ENCODE measurements at regions of chr17 and their contacts with region 1.

Region 1: GRCh38 chr17:77542551-77543490 is 402.1 kb downstream of the SEC14L1 start:
- DNase-seq: peak; percentile 83
- H3K4me3 ChIP-seq: no peak overlapping the region
- H3K27ac ChIP-seq: no peak overlapping the region
- H3K4me1 ChIP-seq: peaks cover 10% of the 10 kb centered on the region
- CTCF ChIP-seq: peak; percentile 98

Region 2: GRCh38 chr17:77741109-77741508 is 198.3 kb after region 1 on chr17:
- CTCF ChIA-PET with region 1: no interaction called
- POLR2A ChIA-PET with region 1: no interaction called
- intact Hi-C with region 1: loop called (anchors 10 kb)
- DNase-seq: peak; percentile 37
- H3K4me3 ChIP-seq: no peak overlapping the region
- H3K27ac ChIP-seq: no peak overlapping the region
- H3K4me1 ChIP-seq: no peaks in the 10 kb centered on the region
- CTCF ChIP-seq: peak; percentile 95

Region 3: DNA sequence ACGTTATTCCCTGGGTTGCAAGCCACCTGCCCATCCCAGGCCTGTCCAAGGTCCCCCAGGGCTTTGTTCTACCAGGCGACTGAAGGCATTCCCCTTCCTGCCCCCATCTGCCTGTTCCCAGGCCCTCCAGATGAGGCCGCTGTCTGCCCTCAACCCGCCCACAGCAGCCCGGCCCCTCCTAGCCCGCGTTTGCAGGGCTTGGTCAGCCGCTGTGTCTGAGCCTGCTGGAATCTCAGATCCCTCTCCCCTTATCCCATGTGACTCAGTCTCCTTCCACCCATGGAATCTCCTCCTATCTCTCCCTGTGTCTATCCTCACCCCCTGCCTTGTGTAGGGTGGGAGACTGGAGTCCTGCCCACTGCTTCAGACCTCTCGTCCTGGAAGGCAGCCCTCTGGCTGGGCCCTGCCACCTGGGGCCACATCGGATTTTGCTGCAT is 229.7 kb after region 1 on chr17:
- CTCF ChIA-PET with region 1: no interaction called
- POLR2A ChIA-PET with region 1: no interaction called
- intact Hi-C with region 1: loop called (anchors 2 kb)
- DNase-seq: peak; percentile 73
- H3K4me3 ChIP-seq: no peak overlapping the region
- H3K27ac ChIP-seq: no peak overlapping the region
- H3K4me1 ChIP-seq: no peaks in the 10 kb centered on the region
- CTCF ChIP-seq: peak; percentile 97

Region 4: DNA sequence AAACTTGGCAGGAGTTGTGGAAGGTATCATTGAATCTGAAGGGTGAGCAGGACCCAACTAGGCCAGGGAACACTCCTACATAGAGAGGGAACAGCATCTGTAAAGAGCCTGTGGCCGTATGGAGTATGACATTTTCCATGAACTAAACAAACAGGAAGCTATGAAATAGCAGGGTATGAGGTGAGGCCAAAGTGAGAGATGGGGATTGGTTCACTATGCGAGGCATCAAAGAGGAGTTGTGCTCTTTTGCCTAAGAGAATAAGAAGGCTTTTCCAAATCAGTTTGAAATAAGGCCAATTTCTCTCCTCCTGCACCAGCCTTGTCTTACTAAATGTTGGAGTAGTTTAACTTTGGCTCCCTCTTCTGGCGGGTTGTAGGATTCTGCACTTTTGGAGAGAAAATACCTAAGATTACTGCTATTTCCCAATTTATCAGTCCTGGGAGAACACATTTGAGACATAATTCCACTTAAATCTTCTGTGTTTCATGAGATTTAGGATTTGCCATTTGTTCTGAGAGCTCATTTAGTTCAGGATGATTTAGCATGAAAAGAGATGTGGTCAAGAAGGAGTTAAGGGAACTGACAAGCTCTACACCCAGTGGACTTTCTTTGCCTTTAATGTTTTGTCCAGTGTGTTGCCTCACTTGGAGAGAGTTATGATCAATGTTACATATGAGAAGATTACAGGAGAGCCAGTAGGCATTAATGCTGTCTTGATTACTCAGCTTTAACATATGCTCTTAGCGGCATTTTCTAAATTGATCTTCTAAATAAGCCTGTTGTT is 471.1 kb after region 1 on chr17:
- CTCF ChIA-PET with region 1: interaction called, 4 read pairs
- POLR2A ChIA-PET with region 1: interaction called, 3 read pairs
- intact Hi-C with region 1: loop called (anchors 1 kb)
- DNase-seq: peak; percentile 79
- H3K4me3 ChIP-seq: no peak overlapping the region
- H3K27ac ChIP-seq: no peak overlapping the region
- H3K4me1 ChIP-seq: no peaks in the 10 kb centered on the region
- CTCF ChIP-seq: peak; percentile 100

Measured in OCI-LY7 (cell line).